Gastrocnemius medialis (tissue), 4 donors: ENCODE measurements at regions of chr4 and their contacts with region 1.

Region 1: GRCh38 chr4:169612871-169613859 is 782 bp upstream of the NEK1 start:
- DNase-seq: peak; percentile 53 to 72
- ATAC-seq: peak; percentile 77 to 82
- H3K4me3 ChIP-seq: peak overlapping the region; percentile 61 to 92 (median 92)
- H3K27ac ChIP-seq: peak overlapping the region; percentile 93 to 99 (median 96)
- H3K4me1 ChIP-seq: peaks cover 13 to 15% of the 10 kb centered on the region in 2 donors
- H3K27me3 ChIP-seq: no peaks in the 10 kb centered on the region
- CTCF ChIP-seq: peak; percentile 41 to 69 (median 53)
- POLR2A ChIP-seq: no peak

Region 2: GRCh38 chr4:169492438-169493163 is 120.6 kb before region 1 on chr4:
- in situ Hi-C with region 1: no loop called
- intact Hi-C with region 1: no loop called
- DNase-seq: no peak
- ATAC-seq: no peak
- H3K4me3 ChIP-seq: no peak overlapping the region
- H3K27ac ChIP-seq: no peak overlapping the region
- H3K4me1 ChIP-seq: no peaks in the 10 kb centered on the region
- H3K27me3 ChIP-seq: no peaks in the 10 kb centered on the region
- CTCF ChIP-seq: peak; percentile 34 to 65 (median 47)
- POLR2A ChIP-seq: no peak

Region 3: DNA sequence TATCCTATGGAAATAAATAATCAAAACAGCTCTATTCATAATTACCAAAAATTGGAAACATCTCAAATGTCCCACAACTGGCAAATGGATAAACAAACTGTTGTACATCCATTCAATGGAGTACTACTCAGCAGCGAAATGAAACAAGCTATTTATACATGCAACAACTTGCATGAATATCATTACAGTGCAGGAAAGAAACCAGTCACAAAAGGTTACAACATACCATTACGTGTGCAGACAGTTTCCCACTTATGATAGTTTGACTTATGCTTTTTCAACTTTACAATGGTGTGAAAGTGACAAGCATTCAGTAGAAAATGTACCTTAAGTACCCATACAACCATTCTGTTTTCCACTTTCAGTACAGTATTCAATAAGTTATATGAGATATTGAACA is 83.1 kb before region 1 on chr4:
- in situ Hi-C with region 1: no loop called
- intact Hi-C with region 1: no loop called
- DNase-seq: no peak
- ATAC-seq: no peak
- H3K4me3 ChIP-seq: no peak overlapping the region
- H3K27ac ChIP-seq: no peak overlapping the region
- H3K4me1 ChIP-seq: no peaks in the 10 kb centered on the region
- H3K27me3 ChIP-seq: no peaks in the 10 kb centered on the region
- CTCF ChIP-seq: no peak
- POLR2A ChIP-seq: no peak

Region 4: DNA sequence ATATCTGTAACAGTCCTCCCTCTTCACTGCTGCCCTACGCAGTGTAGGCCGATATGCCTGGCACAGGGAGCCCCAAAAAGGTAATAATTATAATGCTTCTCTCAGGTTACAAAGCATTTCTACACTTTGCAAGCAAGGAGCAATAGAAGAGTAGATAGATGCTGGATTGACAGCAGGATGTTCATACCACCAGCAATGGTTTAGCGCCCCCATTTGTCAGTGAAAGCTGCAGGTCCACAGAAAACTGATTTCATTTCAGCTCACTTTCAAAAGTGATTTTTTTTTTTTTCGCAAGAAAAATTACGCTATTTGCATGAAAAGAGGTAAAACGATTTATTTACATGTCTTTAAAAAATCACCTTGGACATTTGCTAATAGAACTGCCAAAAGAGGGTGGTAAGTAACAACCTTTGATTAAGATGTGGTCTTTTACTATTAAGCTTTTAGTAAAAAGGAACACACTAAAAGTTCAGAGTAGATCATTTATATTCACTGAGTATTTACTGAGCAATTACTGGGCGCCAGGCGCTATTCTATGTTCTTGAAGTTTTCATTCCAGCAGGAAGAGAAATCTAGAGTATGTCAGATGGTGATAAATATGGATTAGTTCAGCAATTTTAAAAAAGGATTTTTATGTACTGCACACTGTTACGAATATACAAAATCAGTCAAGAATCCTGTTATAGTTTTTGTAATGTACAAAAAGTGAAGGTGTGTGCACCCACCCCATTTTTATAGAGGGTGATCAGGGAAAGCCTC is 110.2 kb after region 1 on chr4:
- in situ Hi-C with region 1: loop called in 1 of 4 experiments (anchors 25 kb)
- intact Hi-C with region 1: loop called (anchors 2 kb)
- DNase-seq: no peak
- ATAC-seq: no peak
- H3K4me3 ChIP-seq: no peak overlapping the region
- H3K27ac ChIP-seq: no peak overlapping the region
- H3K4me1 ChIP-seq: no peaks in the 10 kb centered on the region
- H3K27me3 ChIP-seq: no peaks in the 10 kb centered on the region
- CTCF ChIP-seq: no peak
- POLR2A ChIP-seq: no peak

Region 5: DNA sequence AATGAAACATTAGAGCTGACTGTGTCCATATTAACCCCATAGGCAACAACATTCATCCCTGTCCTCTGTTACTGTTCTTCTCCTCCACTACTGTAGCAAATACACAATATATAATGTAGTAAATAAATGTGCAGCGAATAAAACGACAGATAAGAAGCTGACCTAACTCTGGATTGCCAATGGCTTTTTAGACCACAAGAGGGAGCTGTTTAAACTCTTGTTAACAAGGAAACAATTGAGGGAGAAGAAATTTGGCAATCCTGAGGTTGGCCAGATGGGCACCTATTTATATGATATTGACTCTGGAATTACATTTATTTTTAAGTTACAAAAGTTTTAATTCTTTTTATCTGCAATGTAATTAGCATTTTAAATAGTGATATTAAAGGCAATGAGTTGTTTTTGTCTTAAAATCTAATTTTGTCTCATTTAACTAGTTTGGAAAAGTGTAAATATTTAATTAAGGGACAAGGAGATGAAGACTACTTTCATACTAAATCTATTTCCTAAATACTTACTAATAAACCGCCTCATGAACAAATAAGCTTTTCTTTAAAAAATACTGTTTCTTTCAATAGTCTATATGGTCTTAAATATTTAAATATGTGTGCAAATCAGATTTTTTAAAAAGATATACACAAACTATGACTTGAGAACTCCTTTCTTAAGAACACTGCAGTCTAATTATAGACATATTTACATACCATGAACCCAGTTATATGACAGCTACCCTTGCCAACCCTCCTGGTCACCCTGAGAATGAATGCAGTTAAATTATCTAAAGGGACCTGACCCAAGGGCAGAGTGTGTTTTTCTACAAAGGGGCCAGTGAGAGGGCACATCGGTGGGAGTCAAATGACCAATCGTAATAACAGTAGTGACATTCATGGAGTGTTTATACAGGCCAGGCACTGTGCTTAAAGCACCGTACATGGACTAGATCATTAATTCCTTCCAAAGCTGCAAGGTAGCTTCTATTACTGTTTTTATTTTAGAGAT is 197.5 kb after region 1 on chr4:
- in situ Hi-C with region 1: no loop called
- intact Hi-C with region 1: loop called (anchors 2 kb)
- DNase-seq: peak in 1 of 2 donors; percentile 3
- ATAC-seq: peak in 1 of 2 donors; percentile 66
- H3K4me3 ChIP-seq: no peak overlapping the region
- H3K27ac ChIP-seq: no peak overlapping the region
- H3K4me1 ChIP-seq: no peaks in the 10 kb centered on the region
- H3K27me3 ChIP-seq: no peaks in the 10 kb centered on the region
- CTCF ChIP-seq: peak; percentile 60 to 84 (median 69)
- POLR2A ChIP-seq: no peak

Region 6: DNA sequence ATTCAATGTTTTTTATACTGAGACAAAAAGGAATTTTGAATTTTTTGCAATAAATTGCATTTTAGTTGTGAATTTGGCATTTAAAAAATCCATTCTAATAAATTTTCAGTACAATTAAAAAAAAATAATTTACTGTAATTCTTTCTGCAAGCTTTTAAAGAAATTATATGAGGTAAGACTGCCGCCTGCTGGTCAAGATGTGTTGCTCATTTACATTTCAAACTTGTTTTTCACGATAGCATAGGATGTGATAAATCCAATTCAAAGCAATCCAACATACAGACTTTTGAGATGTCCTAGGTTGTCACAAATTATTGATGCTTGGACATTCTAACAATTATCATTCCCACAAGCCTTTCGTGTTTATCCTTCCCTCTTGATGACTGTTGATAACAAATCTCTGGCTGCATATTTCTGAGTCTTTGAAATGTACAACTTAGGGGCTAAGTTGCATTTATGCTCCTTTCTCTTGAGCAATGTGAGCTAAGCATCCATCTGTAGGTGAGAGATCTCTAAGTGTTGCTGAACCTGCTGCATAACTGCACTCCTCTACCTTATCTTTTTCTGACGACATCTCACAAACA is 434.7 kb after region 1 on chr4:
- in situ Hi-C with region 1: loop called (anchors 10 to 25 kb)
- intact Hi-C with region 1: loop called (anchors 2 kb)
- DNase-seq: peak in 1 of 2 donors; percentile 15
- ATAC-seq: no peak
- H3K4me3 ChIP-seq: no peak overlapping the region
- H3K27ac ChIP-seq: no peak overlapping the region
- H3K4me1 ChIP-seq: no peaks in the 10 kb centered on the region
- H3K27me3 ChIP-seq: no peaks in the 10 kb centered on the region
- CTCF ChIP-seq: peak; percentile 67 to 80 (median 71)
- POLR2A ChIP-seq: no peak